Motor neuron (in vitro differentiated cells): ENCODE measurements at regions of chr7 and their contacts with region 1.

Region 1: DNA sequence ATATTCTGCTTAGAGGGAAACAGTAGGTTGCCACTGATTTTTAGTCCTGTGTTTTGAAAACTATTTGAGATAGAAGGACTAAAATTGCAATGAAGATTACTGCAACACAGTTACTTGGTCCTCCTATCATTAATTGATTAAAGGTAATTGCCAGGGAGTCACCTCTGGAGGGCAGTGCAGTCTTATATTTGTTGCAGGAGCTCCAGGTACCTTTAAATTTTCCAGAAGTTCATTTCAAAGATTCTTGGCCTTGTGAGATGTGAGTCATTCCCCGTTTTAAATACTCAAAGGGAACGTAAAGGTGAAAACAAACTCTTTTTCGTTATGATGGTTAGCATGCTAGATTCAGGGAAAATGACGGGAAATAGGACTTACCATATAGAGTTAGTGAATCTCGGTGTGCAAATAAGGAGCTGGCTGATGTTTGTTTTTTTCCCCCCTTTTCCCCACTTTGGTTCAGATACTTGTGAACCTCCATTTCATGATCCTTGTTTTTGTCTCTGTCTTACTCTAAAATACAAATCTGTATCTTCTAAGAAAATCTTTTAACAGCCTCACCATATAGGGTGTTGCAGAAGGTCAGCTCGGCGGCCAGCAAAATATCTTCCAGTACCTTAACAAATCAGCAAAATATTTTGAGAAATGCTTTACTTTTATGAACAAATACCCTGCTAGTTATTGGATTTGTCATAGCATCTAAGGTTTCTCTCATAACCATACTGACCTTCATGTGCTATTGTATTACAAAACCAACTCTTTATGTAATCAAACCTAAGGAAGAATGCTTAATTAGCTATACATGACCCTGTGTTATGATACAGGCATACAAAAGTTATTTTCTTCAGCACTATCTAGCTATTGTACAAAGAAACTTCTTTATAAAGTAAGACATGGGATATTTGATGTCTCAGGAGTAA is 143.0 kb upstream of the HDAC9 start:
- ATAC-seq: peak; percentile 50 to 75 (median 64)
- H3K4me3 ChIP-seq: no peak overlapping the region
- H3K27ac ChIP-seq: no peak overlapping the region
- H3K4me1 ChIP-seq: peaks cover 16 to 20% of the 10 kb centered on the region in 2 donors

Region 2: GRCh38 chr7:17830206-17830605 is 522.4 kb before region 1 on chr7:
- in situ Hi-C with region 1: no loop called
- ATAC-seq: no peak
- H3K4me3 ChIP-seq: no peak overlapping the region
- H3K27ac ChIP-seq: no peak overlapping the region
- H3K4me1 ChIP-seq: no peaks in the 10 kb centered on the region

Region 3: DNA sequence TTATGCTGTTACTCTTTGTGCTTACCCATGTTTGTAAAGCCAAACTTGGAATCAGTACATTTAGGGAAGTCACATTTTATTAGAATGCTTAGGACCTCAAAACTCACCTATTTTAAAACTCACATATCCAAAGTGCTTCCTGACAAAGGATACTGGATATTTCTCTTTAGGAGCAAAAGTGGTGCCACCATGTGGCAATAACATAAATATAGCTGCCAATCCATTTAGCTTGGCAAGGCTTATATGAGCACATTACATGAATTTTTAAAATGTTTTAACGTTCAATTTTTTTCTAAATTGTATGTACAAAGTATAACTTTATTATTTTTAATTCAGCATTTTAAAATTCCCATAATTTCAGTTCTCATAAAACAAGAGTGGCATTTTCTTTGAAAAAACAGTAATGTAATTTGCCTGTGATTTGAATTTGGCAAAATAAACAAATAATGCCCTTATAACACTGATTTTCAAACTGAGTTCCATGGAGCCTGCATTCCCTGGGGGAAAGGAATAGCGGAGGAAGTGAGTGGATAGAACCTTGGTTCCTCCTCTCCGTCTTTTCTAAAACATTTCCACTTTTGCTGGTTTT is 218.4 kb after region 1 on chr7:
- in situ Hi-C with region 1: loop called in 7 of 9 experiments (anchors 10 to 25 kb)
- ATAC-seq: peak in 5 of 8 experiments; percentile 23 to 57 (median 36)
- H3K4me3 ChIP-seq: no peak overlapping the region
- H3K27ac ChIP-seq: no peak overlapping the region
- H3K4me1 ChIP-seq: no peaks in the 10 kb centered on the region

Region 4: DNA sequence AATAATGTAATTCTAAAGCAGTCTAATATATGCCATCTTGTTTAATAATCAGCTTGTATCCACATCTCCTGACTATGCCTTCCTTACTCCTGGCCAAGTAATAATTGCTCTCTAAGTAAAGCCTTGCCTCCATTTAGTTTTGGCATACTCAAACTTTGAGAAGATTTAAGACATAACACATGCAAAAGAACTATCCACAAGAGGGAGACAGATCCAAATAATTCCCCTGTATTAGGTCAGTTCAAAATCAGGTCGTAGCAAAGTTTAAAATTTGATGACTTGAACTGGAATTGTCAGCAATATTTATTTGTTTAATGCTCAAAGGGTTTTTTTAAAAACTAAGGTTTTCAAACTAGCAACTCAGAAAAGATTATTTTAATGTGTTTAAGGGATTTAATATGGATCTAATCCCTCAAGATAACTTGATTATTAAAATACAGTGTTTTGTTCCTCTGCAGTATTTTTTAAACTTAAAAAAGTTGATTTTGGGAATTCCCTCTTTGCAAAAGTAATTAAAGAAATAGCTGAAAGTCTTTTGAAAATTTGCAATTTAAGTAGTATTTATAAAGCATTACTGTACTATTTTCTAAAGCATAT is 238.2 kb after region 1 on chr7:
- in situ Hi-C with region 1: loop called in 2 of 9 experiments (anchors 25 kb)
- ATAC-seq: peak in 4 of 8 experiments; percentile 26 to 95 (median 86)
- H3K4me3 ChIP-seq: no peak overlapping the region
- H3K27ac ChIP-seq: no peak overlapping the region
- H3K4me1 ChIP-seq: no peaks in the 10 kb centered on the region

Region 5: GRCh38 chr7:18666107-18666728 is 313.6 kb after region 1 on chr7:
- in situ Hi-C with region 1: loop called in 2 of 9 experiments (anchors 25 kb)
- ATAC-seq: peak; percentile 61 to 100 (median 85)
- H3K4me3 ChIP-seq: no peak overlapping the region
- H3K27ac ChIP-seq: no peak overlapping the region
- H3K4me1 ChIP-seq: no peaks in the 10 kb centered on the region